ENCODE measurements at regions of chr5 and their contacts with region 1.

Region 1: GRCh38 chr5:181159286-181159829 is 12.0 kb downstream of the OR2V2 start:
- DNase-seq: peak; percentile 97
- H3K4me3 Mint-ChIP-seq: peak overlapping the region; percentile 60
- H3K27ac Mint-ChIP-seq: peak overlapping the region; percentile 85
- H3K4me1 Mint-ChIP-seq: peaks cover 30% of the 10 kb centered on the region
- H3K27me3 Mint-ChIP-seq: peaks cover 14% of the 10 kb centered on the region

Region 2: DNA sequence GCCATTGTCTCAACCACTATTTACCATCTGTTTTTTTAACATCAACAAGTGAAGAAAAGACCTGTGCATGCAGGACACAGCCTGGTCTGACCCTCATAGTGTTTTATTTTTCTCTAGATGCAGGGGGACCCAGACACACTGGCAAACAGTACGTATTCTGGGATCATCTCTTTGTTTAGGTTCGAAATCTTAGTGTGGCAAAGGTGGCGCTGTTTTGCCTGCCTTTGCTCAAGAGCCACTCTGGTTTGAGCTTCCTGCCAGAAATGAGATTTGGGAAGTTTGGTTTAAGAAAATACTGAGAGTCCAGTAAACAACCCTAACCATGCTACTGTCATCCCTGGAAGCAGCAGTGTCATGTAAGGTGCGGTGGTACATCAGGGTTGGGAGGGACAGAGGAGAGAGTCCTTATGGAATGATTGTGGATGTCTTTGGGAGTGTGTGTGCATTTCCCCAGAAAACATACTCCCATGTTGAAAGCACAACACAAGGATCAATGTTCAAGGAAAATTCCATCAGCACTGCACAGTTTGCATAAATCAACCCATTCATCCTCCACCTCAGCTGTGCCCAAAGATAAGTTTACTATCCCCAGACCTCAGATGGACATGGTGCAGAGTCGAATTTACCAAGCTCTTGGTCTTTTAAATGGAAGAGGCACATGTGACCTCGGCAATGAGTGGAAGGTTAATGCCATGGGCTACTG is 476.0 kb before region 1 on chr5:
- intact Hi-C with region 1: no loop called
- DNase-seq: no peak
- H3K4me3 Mint-ChIP-seq: no peak overlapping the region
- H3K27ac Mint-ChIP-seq: no peak overlapping the region
- H3K4me1 Mint-ChIP-seq: peaks cover 1% of the 10 kb centered on the region
- H3K27me3 Mint-ChIP-seq: peaks cover 3% of the 10 kb centered on the region

Region 3: GRCh38 chr5:180868960-180869359 is 290.4 kb before region 1 on chr5:
- intact Hi-C with region 1: loop called (anchors 2 kb)
- DNase-seq: peak; percentile 89
- H3K4me3 Mint-ChIP-seq: no peak overlapping the region
- H3K27ac Mint-ChIP-seq: no peak overlapping the region
- H3K4me1 Mint-ChIP-seq: peaks cover 6% of the 10 kb centered on the region
- H3K27me3 Mint-ChIP-seq: peaks cover 10% of the 10 kb centered on the region

Region 4: DNA sequence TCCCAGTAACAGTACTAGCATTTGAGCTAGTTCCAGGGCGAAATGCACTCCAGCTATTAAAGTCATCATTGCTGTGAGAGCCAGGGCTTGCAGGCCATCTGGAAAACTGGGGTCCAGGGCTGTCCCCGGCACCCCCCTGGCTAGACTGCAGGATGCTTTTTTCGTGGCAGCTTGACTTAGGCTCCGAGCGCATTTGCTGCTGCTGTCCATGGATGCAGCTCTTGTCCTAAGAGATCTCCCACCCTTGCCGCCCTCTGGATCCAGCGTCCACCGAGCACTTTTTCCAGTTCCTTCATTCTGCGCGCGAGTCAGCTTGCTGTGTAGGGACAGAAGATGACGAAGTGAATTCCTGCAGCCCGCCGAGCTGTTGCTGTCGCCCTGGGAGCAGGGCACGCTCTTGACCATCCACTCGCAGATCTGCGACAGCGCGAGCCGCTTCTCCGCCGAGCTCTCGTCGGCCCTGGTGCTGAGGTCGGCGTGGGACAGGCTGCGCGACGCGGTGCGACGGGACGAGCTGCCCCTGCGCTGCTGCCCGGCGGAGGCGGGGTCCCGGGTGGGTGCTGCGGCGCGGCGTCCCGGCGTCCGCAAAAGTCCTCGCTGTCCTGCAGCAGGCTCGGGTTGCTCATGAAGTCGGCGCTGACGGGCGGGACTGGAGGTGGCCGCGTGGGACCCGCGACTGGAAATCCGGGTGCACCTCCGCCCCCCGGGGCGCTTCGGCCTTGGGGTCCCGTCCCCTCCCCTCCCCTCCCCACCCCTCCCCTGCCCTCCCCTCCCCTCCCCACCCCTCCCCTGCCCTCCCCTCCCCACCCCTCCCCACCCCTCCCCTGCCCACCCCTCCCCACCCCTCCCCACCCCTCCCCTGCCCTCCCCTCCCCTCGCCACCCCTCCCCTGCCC is 59.0 kb before region 1 on chr5:
- intact Hi-C with region 1: loop called (anchors 10 kb)
- DNase-seq: peak; percentile 57
- H3K4me3 Mint-ChIP-seq: no peak overlapping the region
- H3K27ac Mint-ChIP-seq: no peak overlapping the region
- H3K4me1 Mint-ChIP-seq: peaks cover 4% of the 10 kb centered on the region
- H3K27me3 Mint-ChIP-seq: peaks cover 32% of the 10 kb centered on the region

Region 5: GRCh38 chr5:181181650-181182565 is 22.6 kb after region 1 on chr5:
- intact Hi-C with region 1: loop called (anchors 1 kb)
- DNase-seq: peak; percentile 89
- H3K4me3 Mint-ChIP-seq: no peak overlapping the region
- H3K27ac Mint-ChIP-seq: peak overlapping the region; percentile 2
- H3K4me1 Mint-ChIP-seq: peaks cover 25% of the 10 kb centered on the region
- H3K27me3 Mint-ChIP-seq: peaks cover 9% of the 10 kb centered on the region

Region 6: DNA sequence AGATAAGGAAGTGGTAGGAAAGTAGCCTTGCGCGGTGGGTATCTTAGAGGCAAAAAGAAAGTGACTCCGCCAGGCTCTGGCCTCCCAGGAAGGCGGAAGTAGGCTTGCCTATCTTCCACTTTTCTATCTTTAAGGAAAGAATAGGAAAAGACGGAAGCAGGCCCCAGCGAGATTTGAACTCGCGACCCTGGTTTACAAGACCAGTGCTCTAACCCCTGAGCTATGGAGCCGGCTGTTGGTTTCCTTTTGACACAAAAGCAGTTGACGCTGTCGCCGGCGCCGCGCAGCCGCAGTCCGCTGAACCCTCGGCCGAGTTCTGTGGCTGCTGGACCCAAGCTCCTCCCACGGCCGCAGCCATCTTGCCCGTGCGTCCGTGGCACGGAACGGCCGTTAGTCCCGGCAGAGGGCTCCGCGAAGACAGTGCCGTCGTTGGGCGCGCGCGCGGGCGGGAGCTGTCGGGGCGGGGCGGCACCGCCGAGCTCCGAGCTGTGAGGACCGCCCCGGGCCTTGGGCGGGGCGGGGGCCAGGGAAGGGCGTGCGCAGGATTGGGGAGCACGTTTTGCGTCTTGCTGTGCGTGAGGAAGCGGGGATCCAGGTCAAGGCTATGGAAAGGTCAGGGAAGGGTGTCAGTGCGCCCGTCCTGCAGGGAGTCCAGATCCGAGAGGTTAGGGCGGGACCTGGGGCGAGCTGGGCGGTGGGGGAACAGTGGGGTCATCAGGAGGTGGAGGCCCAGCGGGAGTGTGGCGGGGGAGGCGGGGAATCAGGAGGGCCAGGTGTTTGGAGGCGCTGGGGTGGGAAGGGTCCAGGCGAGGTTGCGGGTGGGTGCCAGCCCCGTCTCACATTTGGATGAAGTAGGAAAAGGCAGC is 32.4 kb after region 1 on chr5:
- intact Hi-C with region 1: loop called (anchors 2 kb)
- DNase-seq: peak; percentile 99
- H3K4me3 Mint-ChIP-seq: peak overlapping the region; percentile 92
- H3K27ac Mint-ChIP-seq: peak overlapping the region; percentile 95
- H3K4me1 Mint-ChIP-seq: peaks cover 40% of the 10 kb centered on the region
- H3K27me3 Mint-ChIP-seq: peaks cover 10% of the 10 kb centered on the region

Region 7: DNA sequence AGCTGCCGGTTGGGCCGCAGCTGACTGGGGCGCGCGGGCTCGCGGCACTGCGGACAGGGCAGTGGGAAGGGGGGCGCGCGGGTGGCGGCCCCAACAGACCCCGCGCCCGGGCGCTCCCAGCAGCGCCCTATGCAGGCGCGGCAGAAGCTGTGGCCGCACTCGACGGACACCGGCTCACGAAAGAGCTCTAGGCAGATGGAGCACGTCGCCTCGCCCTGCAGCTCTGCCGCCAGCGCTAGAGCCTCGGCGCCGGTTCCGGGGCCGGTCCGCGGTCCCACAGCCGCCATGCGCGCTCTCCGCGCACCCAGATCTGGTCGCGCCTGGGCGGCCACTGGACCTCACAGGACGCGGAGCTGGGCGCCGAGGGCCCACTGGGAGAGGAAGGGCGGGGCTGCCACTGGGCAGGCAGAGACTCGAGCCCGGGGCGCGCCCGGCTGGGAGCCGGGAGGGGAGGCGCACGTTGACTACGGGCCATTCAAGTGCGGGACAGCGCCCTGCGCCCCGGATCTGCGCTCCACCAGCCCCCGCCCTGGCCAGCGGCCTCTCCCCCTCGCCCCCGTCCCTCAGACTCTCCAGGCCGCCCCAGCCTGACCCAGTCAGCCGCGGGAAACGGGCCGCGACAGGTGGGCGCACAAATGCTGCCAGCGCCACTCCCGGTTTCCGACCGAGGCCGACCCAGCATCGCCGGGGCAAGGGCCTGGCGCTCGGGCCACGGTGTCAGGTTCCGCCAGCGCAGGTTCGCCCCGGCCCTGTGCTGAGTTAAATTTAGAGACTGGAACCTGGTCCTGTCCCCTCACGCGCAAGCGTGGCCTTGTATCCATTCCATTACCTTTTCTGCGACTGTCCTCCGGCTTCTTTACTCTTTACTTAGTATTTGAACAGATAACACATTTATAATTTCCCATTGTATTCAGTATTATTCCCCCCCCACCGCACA is 45.7 kb after region 1 on chr5 and contains the start of gene TRIM7:
- intact Hi-C with region 1: no loop called
- DNase-seq: peak; percentile 79
- H3K4me3 Mint-ChIP-seq: peak within 1 kb of the TSS; percentile 91
- H3K27ac Mint-ChIP-seq: peak within 1 kb of the TSS; percentile 91
- H3K4me1 Mint-ChIP-seq: peaks cover 32% of the 10 kb centered on the region
- H3K27me3 Mint-ChIP-seq: peaks cover 42% of the 10 kb centered on the region
- total RNA-seq, gene TRIM7: 2.7 TPM in 2 replicates

Region 8: DNA sequence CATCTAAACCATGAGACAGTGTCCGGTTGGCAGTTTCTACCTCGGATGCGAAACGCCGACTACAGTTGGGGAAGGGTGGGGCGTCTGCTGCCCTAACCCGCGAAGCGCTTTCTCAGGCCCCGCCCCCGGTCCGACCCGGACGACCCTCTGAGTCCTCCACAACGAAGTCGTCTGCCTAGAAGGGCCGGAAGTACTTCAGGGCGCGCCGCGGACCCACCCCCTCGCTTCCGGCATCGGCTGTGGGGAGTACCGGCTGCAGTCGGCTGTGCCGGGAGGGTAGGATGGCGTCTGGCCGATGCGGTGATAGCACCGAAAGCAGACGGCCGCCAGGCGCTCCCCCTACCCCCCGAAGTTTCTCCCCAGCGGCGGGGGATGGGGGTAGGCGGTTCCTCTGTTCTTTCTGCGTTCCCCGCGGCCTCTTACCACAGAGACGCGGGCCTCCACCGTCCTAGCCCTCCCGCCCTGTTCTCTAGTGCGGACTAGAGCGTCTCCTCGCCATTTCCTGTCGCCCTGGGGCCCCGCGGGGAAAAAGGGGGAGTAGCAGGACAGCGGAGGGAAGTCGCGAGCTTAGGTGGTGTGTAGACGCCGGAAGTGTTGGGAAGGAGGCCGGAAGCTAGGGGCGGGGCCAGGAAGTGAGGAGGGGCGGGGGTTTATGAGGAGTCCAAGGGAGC is 63.8 kb after region 1 on chr5 and contains the start of gene TRIM41:
- intact Hi-C with region 1: loop called (anchors 2 kb)
- DNase-seq: peak; percentile 99
- H3K4me3 Mint-ChIP-seq: peak within 1 kb of the TSS; percentile 98
- H3K27ac Mint-ChIP-seq: peak within 1 kb of the TSS; percentile 99
- H3K4me1 Mint-ChIP-seq: peaks cover 53% of the 10 kb centered on the region
- H3K27me3 Mint-ChIP-seq: peaks cover 5% of the 10 kb centered on the region
- total RNA-seq, gene TRIM41: 31.6 and 35.2 TPM in 2 replicates